CD14-positive monocyte (primary cell): ENCODE measurements at regions of chr7 and their contacts with region 1.

Region 1: GRCh38 chr7:65006094-65006992 is at the start of gene ERV3-1:
- DNase-seq: peak; percentile 91 to 95 (median 93)
- H3K4me3 ChIP-seq: peak within 1 kb of the TSS; percentile 68 to 92 (median 76)
- H3K4me3 Mint-ChIP-seq: peak within 1 kb of the TSS; percentile 95 to 98
- H3K27ac ChIP-seq: peak within 1 kb of the TSS; percentile 90 to 95
- H3K27ac Mint-ChIP-seq: peak within 1 kb of the TSS; percentile 98 to 100 (median 99)
- H3K4me1 ChIP-seq: peaks cover 22 to 26% of the 10 kb centered on the region in 2 donors
- H3K4me1 Mint-ChIP-seq: peaks cover 46% of the 10 kb centered on the region
- H3K27me3 ChIP-seq: no peaks in the 10 kb centered on the region
- H3K27me3 Mint-ChIP-seq: peaks cover 0 to 2% (median 2%) of the 10 kb centered on the region in 3 donors
- CTCF ChIP-seq: no peak
- polyA plus RNA-seq, gene ERV3-1: 2.1 to 23.4 (median 7.9) TPM

Region 2: DNA sequence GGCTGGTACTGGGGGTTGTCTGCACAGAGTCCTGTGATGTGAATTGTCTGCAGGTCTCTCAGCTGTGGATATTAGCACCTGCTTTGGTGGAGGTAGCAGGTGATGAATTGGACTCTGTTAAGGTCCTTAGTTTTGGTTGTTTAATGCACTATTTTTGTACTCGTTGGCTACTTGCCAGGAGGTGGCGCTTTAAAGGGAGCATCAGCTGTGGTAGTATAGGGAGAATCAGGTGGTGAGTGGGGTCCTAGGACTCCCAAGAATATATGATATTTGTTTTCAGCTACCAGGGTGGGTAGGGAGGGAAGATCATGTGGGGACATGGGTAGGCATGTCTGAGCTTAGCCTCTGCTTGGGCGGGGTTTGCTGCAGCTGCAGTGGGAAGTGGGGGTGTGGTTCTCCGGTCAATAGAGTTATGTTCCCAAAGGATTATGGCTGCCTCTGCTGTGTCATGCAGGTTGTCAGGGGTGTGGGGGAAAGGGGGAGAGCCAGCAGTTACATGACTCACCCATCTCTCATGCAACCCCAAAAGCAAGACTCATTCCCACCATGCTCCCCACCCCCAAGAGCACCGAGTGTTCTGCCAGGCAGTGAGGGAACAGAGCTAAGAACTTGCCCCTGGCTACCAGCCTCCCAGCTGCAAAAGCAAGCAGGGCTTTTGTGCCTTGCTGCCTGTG is 157.0 kb before region 1 on chr7:
- intact Hi-C with region 1: no loop called
- DNase-seq: no peak
- H3K4me3 ChIP-seq: no peak overlapping the region
- H3K4me3 Mint-ChIP-seq: no peak overlapping the region
- H3K27ac ChIP-seq: no peak overlapping the region
- H3K27ac Mint-ChIP-seq: no peak overlapping the region
- H3K4me1 ChIP-seq: no peaks in the 10 kb centered on the region
- H3K4me1 Mint-ChIP-seq: no peaks in the 10 kb centered on the region
- H3K27me3 ChIP-seq: no peaks in the 10 kb centered on the region
- H3K27me3 Mint-ChIP-seq: peaks cover 0 to 2% (median 0%) of the 10 kb centered on the region in 3 donors
- CTCF ChIP-seq: no peak

Region 3: GRCh38 chr7:64902806-64903721 is 103.3 kb before region 1 on chr7 and contains the start of gene ZNF273:
- intact Hi-C with region 1: loop called in 1 of 2 experiments (anchors 10 kb)
- DNase-seq: peak; percentile 41 to 72 (median 69)
- H3K4me3 ChIP-seq: peak within 1 kb of the TSS; percentile 61 to 87 (median 85)
- H3K4me3 Mint-ChIP-seq: peak within 1 kb of the TSS; percentile 97 to 99
- H3K27ac ChIP-seq: peak within 1 kb of the TSS; percentile 72 to 80
- H3K27ac Mint-ChIP-seq: peak within 1 kb of the TSS; percentile 90 to 96 (median 93)
- H3K4me1 ChIP-seq: peaks cover 9 to 13% of the 10 kb centered on the region in 2 donors
- H3K4me1 Mint-ChIP-seq: peaks cover 35% of the 10 kb centered on the region
- H3K27me3 ChIP-seq: no peaks in the 10 kb centered on the region
- H3K27me3 Mint-ChIP-seq: peaks cover 1 to 3% (median 1%) of the 10 kb centered on the region in 3 donors
- CTCF ChIP-seq: no peak
- polyA plus RNA-seq, gene ZNF273: 0.21 to 1.7 (median 0.62) TPM